Lower leg skin (tissue), 4 donors: ENCODE measurements at regions of chr1 and their contacts with region 1.

Region 1: DNA sequence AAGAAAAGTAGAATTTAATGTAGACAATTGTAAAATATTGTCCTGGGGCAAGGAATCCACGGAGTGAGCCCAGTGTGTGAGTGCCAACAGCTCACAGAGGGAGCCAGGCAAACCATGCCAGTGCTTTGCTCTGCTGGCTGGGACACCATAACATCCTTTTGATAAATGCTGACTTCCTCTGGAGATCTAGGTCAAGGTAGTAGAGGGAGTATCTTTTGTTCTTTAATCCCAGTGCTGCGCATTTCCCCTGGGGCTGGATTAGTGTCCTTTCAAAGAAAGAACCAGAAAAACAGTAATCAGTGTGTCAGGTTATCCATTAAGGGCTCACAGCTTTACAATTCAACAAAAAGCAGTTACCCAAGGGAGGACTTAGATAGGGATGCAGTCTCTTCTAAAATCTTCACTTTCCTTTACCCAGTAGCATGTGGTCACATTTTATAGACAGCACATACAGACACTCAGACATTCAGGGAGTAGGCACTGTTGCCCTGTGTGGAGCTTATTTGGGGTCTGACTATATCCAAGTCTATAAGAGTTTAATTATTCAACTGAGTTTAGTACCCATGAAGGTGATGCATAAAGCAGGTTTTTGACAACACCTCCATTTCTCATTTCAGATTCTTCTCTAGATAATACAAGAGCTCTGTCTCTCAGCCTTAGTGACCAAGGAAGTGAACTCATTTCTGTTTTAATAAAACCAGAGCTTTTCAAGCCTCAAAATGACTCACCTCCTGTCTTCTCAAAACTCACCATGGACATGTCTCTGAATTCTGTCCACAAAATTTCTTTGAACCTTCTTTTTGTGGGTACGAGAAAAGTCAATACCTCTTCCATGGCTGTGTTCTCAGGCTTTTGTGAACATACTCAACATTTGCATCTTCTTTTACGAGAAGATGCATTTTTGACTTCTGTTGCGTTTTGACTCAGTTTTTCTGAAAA is 215.3 kb downstream of the BRINP2 start:
- DNase-seq: no peak
- H3K4me3 ChIP-seq: no peak overlapping the region
- CTCF ChIP-seq: no peak
- POLR2A ChIP-seq: no peak

Region 2: GRCh38 chr1:178019622-178020021 is 633.6 kb after region 1 on chr1:
- intact Hi-C with region 1: loop called (anchors 5 kb)
- DNase-seq: no peak
- H3K4me3 ChIP-seq: no peak overlapping the region
- CTCF ChIP-seq: no peak
- POLR2A ChIP-seq: no peak